Brain microvascular endothelial cell (primary cell): ENCODE measurements at regions of chr2 and their contacts with region 1.

Region 1: GRCh38 chr2:223601932-223602666 is at the start of gene SCG2:
- DNase-seq: peak; percentile 92
- H3K4me3 ChIP-seq: peak within 1 kb of the TSS; percentile 22
- H3K27ac ChIP-seq: peak within 1 kb of the TSS; percentile 69
- H3K27me3 ChIP-seq: no peaks in the 10 kb centered on the region
- CTCF ChIP-seq: peak; percentile 49

Region 2: DNA sequence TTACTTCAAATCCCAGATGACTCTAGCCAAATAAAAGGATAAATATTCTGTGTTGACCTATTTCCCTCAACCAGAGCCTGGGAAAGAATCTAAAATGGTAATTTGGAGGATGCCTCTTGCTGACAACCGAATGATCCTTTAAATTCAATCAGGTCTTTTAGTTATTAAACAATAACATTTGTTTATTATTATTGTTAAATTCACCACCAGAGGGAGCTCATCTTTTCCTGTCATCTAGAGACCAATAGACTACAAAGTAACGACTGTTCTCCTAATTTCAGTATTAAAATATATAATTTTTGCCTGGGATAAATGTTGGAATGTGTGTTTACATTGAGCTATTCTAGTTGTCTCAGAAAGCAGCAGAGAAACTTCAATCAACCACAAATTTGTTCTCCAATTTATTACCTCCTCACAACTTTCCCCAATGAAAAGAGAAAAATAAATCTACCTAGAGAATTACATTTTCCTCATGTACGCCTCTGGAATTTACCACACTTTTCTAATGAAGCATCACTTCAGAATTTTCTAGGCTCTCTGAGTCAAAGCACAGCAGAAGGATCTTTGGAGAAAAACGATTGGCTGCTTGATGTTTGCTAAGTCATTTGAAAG is 142.7 kb before region 1 on chr2:
- in situ Hi-C with region 1: loop called (anchors 25 kb)
- DNase-seq: no peak
- H3K4me3 ChIP-seq: no peak overlapping the region
- H3K27ac ChIP-seq: peak overlapping the region; percentile 45
- H3K27me3 ChIP-seq: no peaks in the 10 kb centered on the region
- CTCF ChIP-seq: peak; percentile 21